ENCODE measurements at regions of chr2 and their contacts with region 1.

Region 1: GRCh38 chr2:196750982-196751635 is 48.4 kb downstream of the GTF3C3 start:
- DNase-seq: peak; percentile 65
- H3K4me3 Mint-ChIP-seq: no peak overlapping the region
- H3K27ac Mint-ChIP-seq: no peak overlapping the region
- H3K4me1 Mint-ChIP-seq: no peaks in the 10 kb centered on the region
- H3K27me3 Mint-ChIP-seq: no peaks in the 10 kb centered on the region
- CTCF ChIP-seq: peak; percentile 36

Region 2: GRCh38 chr2:196767101-196767500 is 16.0 kb after region 1 on chr2:
- CTCF ChIA-PET with region 1: interaction called, 12 read pairs
- POLR2A ChIA-PET with region 1: no interaction called
- intact Hi-C with region 1: no loop called
- DNase-seq: no peak
- H3K4me3 Mint-ChIP-seq: no peak overlapping the region
- H3K27ac Mint-ChIP-seq: no peak overlapping the region
- H3K4me1 Mint-ChIP-seq: no peaks in the 10 kb centered on the region
- H3K27me3 Mint-ChIP-seq: no peaks in the 10 kb centered on the region
- CTCF ChIP-seq: no peak

Region 3: GRCh38 chr2:196783431-196784094 is 32.5 kb after region 1 on chr2:
- CTCF ChIA-PET with region 1: no interaction called
- POLR2A ChIA-PET with region 1: no interaction called
- intact Hi-C with region 1: no loop called
- DNase-seq: peak; percentile 54
- H3K4me3 Mint-ChIP-seq: no peak overlapping the region
- H3K27ac Mint-ChIP-seq: peak overlapping the region; percentile 16
- H3K4me1 Mint-ChIP-seq: peaks cover 8% of the 10 kb centered on the region
- H3K27me3 Mint-ChIP-seq: no peaks in the 10 kb centered on the region
- CTCF ChIP-seq: no peak